ENCODE measurements at regions of chr20 and their contacts with region 1.

Region 1: DNA sequence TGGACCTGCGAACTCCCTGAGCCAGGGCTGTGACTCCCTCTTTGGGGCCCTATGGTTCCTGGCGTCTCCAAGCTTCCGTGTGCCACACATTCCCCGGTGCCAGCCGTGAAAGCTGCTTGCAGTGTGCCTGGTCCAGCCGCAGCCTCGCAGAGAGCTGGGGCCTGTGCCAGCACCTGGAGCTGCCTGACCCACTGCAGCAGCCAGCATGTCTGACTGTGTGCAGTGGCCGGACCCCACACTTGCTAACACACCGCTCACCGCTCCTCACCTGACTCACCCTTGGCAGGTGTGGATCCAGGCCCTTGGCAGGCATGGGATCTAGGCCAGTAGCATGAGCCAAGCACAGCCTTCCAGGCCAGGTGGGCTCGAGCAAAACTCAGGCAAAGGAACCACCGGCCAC is 227.5 kb downstream of the OTOR start:
- DNase-seq: no peak
- H3K4me3 ChIP-seq: no peak overlapping the region
- H3K4me3 Mint-ChIP-seq: no peak overlapping the region
- H3K27ac Mint-ChIP-seq: no peak overlapping the region
- H3K4me1 ChIP-seq: no peaks in the 10 kb centered on the region
- H3K4me1 Mint-ChIP-seq: no peaks in the 10 kb centered on the region
- H3K27me3 ChIP-seq: no peaks in the 10 kb centered on the region
- H3K27me3 Mint-ChIP-seq: peaks cover 7% of the 10 kb centered on the region
- CTCF ChIP-seq: no peak

Region 2: GRCh38 chr20:17036541-17036940 is 60.9 kb after region 1 on chr20:
- CTCF ChIA-PET with region 1: no interaction called
- POLR2A ChIA-PET with region 1: no interaction called
- intact Hi-C with region 1: loop called (anchors 10 kb)
- DNase-seq: no peak
- H3K4me3 ChIP-seq: no peak overlapping the region
- H3K4me3 Mint-ChIP-seq: no peak overlapping the region
- H3K27ac Mint-ChIP-seq: no peak overlapping the region
- H3K4me1 ChIP-seq: no peaks in the 10 kb centered on the region
- H3K4me1 Mint-ChIP-seq: no peaks in the 10 kb centered on the region
- H3K27me3 ChIP-seq: no peaks in the 10 kb centered on the region
- H3K27me3 Mint-ChIP-seq: peaks cover 10% of the 10 kb centered on the region
- CTCF ChIP-seq: no peak

Region 3: DNA sequence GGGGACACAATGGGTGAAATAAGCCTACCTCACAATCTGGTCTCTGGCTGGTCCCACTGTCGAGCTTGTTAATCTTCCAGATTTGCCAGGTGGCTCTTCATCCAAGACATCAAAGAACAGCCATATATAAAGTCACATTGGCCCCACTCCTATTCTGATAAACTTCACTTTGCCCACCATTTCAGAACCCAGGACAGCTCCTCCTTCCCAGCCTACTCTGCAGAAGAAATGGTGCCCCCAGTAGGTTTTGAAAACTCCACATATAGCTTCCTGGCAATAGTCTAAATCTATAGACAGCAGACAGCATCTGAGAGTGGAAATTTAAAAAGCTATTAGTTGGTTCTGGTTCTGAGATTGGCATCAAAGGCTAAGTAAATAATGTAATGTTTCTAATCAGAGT is 108.1 kb after region 1 on chr20:
- CTCF ChIA-PET with region 1: no interaction called
- POLR2A ChIA-PET with region 1: no interaction called
- intact Hi-C with region 1: no loop called
- DNase-seq: peak in 1 of 2 experiments; percentile 32
- H3K4me3 ChIP-seq: no peak overlapping the region
- H3K4me3 Mint-ChIP-seq: no peak overlapping the region
- H3K27ac Mint-ChIP-seq: no peak overlapping the region
- H3K4me1 ChIP-seq: no peaks in the 10 kb centered on the region
- H3K4me1 Mint-ChIP-seq: no peaks in the 10 kb centered on the region
- H3K27me3 ChIP-seq: no peaks in the 10 kb centered on the region
- H3K27me3 Mint-ChIP-seq: peaks cover 5% of the 10 kb centered on the region
- CTCF ChIP-seq: peak in 1 of 2 experiments; percentile 13